IMR-90 (cell line): ENCODE measurements at regions of chr11 and their contacts with region 1.

Region 1: GRCh38 chr11:82146789-82147188 is 586.9 kb downstream of the FAM181B start:
- DNase-seq: no peak
- ATAC-seq: no peak
- H3K4me3 ChIP-seq: no peak overlapping the region
- H3K27ac ChIP-seq: no peak overlapping the region
- H3K4me1 ChIP-seq: no peaks in the 10 kb centered on the region
- H3K27me3 ChIP-seq: no peaks in the 10 kb centered on the region
- CTCF ChIP-seq: no peak
- POLR2A ChIP-seq: no peak
- RAD21 ChIP-seq: no peak

Region 2: GRCh38 chr11:82038153-82038552 is 108.6 kb before region 1 on chr11:
- CTCF ChIA-PET with region 1: no interaction called
- POLR2A ChIA-PET with region 1: no interaction called
- dilution Hi-C with region 1: no loop called
- in situ Hi-C with region 1: no loop called
- intact Hi-C with region 1: no loop called
- DNase-seq: no peak
- ATAC-seq: no peak
- H3K4me3 ChIP-seq: no peak overlapping the region
- H3K27ac ChIP-seq: no peak overlapping the region
- H3K4me1 ChIP-seq: no peaks in the 10 kb centered on the region
- H3K27me3 ChIP-seq: no peaks in the 10 kb centered on the region
- CTCF ChIP-seq: no peak
- POLR2A ChIP-seq: no peak
- RAD21 ChIP-seq: no peak

Region 3: DNA sequence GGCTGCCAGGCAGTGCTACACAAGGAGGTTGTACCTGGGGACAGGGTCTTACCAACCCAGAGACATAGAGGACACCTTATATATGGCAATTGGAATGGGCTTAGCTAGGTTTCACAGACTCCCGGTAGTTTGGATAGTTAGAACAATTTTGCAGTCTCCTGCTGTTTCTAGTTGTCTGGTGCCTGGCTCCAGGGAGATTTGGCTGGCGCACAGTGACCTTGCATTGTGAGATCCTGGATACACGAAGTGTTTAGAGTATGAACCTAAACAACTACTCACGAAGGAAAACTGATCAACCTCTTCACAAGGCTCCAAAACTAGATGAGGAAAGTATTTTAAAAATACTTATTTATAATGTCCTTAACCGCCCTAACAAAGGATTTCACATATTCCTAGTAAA is 27.8 kb before region 1 on chr11:
- CTCF ChIA-PET with region 1: no interaction called
- POLR2A ChIA-PET with region 1: no interaction called
- dilution Hi-C with region 1: no loop called
- in situ Hi-C with region 1: no loop called
- intact Hi-C with region 1: loop called (anchors 1 kb)
- DNase-seq: no peak
- ATAC-seq: no peak
- H3K4me3 ChIP-seq: no peak overlapping the region
- H3K27ac ChIP-seq: no peak overlapping the region
- H3K4me1 ChIP-seq: no peaks in the 10 kb centered on the region
- H3K27me3 ChIP-seq: no peaks in the 10 kb centered on the region
- CTCF ChIP-seq: no peak
- POLR2A ChIP-seq: no peak
- RAD21 ChIP-seq: no peak

Region 4: DNA sequence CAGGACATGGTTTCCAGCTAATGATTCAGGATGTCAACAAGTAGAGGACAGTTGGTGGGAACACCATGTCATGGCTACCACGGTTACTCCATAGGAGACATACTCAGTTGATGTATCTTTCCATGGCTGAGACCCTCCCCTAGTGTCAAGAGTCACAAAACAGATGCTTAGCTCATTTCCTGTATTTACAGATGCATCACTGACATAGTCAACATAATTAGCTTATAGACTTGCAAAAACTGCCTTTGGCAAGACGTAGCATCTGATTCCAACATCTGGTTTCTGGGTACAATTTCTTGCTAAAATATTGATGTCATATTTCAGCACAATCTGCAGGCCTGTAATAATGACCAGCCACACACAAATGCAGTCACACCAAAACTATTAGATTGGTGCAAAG is 36.6 kb after region 1 on chr11:
- CTCF ChIA-PET with region 1: no interaction called
- POLR2A ChIA-PET with region 1: no interaction called
- dilution Hi-C with region 1: no loop called
- in situ Hi-C with region 1: no loop called
- intact Hi-C with region 1: no loop called
- DNase-seq: no peak
- ATAC-seq: no peak
- H3K4me3 ChIP-seq: no peak overlapping the region
- H3K27ac ChIP-seq: no peak overlapping the region
- H3K4me1 ChIP-seq: no peaks in the 10 kb centered on the region
- H3K27me3 ChIP-seq: no peaks in the 10 kb centered on the region
- CTCF ChIP-seq: no peak
- POLR2A ChIP-seq: no peak
- RAD21 ChIP-seq: no peak

Region 5: GRCh38 chr11:82194521-82194920 is 47.7 kb after region 1 on chr11:
- CTCF ChIA-PET with region 1: no interaction called
- POLR2A ChIA-PET with region 1: no interaction called
- dilution Hi-C with region 1: no loop called
- in situ Hi-C with region 1: no loop called
- intact Hi-C with region 1: no loop called
- DNase-seq: no peak
- ATAC-seq: no peak
- H3K4me3 ChIP-seq: no peak overlapping the region
- H3K27ac ChIP-seq: no peak overlapping the region
- H3K4me1 ChIP-seq: no peaks in the 10 kb centered on the region
- H3K27me3 ChIP-seq: no peaks in the 10 kb centered on the region
- CTCF ChIP-seq: no peak
- POLR2A ChIP-seq: no peak
- RAD21 ChIP-seq: no peak